ENCODE measurements at regions of chr6 and their contacts with region 1.

Region 1: GRCh38 chr6:119620846-119621555 is 271.4 kb upstream of the MAN1A1 start:
- DNase-seq: peak; percentile 37 to 79
- H3K4me3 ChIP-seq: peak overlapping the region; percentile 15; the same call in 1 of the 2 replicates
- H3K27ac ChIP-seq: peak overlapping the region; percentile 78
- H3K4me1 ChIP-seq: peaks cover 23% of the 10 kb centered on the region
- H3K27me3 ChIP-seq: no peaks in the 10 kb centered on the region
- CTCF ChIP-seq: no peak

Region 2: GRCh38 chr6:119495230-119495683 is 125.7 kb before region 1 on chr6:
- CTCF ChIA-PET with region 1: no interaction called
- POLR2A ChIA-PET with region 1: no interaction called
- intact Hi-C with region 1: no loop called
- DNase-seq: no peak
- H3K4me3 ChIP-seq: no peak overlapping the region
- H3K27ac ChIP-seq: no peak overlapping the region
- H3K4me1 ChIP-seq: peaks cover 7% of the 10 kb centered on the region; the same call in 1 of the 2 replicates
- H3K27me3 ChIP-seq: no peaks in the 10 kb centered on the region
- CTCF ChIP-seq: no peak

Region 3: DNA sequence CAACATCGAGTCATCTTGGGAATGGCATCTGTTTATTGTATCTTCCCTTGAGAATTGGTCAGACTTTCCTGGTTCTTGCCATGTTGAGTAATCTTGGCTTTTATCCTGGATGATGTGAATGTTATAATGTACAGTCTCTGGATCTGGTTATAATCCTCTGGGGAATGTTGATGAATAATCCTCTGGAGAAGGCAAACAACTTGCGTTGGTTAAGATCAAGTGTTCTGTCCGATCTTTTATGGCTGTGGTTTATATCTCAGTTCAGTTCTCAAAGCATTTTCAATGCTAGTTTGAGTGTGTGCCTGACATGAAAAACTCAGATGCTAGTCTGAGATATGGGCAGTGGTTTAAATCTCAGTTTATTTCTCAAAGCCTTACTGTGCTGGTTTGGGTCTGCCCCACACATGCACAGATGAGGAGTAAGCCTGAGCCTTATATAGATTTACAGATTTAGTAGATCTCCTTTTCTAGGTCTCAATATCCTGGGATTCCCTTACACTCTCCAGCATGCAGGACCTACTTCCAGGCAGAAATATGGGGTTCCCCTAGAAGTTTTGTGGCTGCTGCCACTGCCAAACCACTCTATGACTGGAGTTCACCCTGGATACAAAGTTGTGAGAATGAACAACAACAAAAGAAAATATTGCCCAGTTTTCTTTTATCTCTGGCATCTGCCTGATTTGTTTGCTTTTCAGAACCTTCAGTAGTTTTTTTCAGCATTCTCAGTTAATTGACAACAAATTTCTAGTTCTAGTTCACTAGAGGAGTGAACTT is 79.7 kb before region 1 on chr6:
- CTCF ChIA-PET with region 1: no interaction called
- POLR2A ChIA-PET with region 1: no interaction called
- intact Hi-C with region 1: no loop called
- DNase-seq: peak in 1 of 2 experiments; percentile 75
- H3K4me3 ChIP-seq: no peak overlapping the region
- H3K27ac ChIP-seq: peak overlapping the region; percentile 35
- H3K4me1 ChIP-seq: peaks cover 15% of the 10 kb centered on the region
- H3K27me3 ChIP-seq: no peaks in the 10 kb centered on the region
- CTCF ChIP-seq: no peak

Region 4: DNA sequence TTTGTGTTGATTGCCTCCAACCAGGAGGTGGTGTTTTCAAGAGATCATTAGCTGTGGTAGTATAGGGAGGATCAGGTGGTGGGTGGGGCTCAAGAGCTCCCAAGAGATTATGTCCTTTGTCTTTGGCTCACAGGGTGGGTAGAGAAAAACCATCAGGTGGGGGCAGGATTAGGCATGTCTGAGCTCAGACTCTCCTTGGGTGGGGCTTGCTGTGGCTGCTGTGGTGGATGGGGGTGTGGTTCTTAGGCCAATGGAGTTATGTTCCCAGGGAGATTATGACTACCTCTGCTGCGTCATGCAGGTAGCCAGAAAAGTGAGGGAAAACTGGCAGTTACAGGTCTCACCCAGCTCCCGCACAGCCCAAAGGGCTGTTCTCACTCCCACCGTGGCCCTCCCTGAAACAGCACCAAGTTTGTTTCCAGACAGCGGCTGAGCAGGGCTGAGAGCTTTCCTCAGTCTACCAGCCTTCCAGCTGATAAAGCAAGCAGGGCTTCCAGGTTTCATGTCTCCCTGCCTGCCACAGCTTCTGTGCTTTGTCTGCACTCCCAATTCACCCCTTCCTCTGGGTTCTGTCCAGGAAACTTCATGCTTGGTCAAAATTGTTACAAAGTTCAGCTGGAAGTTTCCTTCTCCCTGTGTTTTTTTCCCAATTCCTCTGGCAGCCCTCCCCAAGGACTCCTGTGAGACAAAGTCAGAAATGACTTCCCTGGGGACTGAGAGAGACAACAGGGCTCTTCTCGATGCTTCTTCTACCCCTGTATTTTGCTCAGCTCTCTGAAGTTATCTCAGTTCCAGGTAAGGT is 209.7 kb after region 1 on chr6:
- CTCF ChIA-PET with region 1: no interaction called
- POLR2A ChIA-PET with region 1: no interaction called
- intact Hi-C with region 1: loop called (anchors 10 kb)
- DNase-seq: peak; percentile 70 to 77
- H3K4me3 ChIP-seq: no peak overlapping the region
- H3K27ac ChIP-seq: peak overlapping the region; percentile 71
- H3K4me1 ChIP-seq: peaks cover 55% of the 10 kb centered on the region
- H3K27me3 ChIP-seq: no peaks in the 10 kb centered on the region
- CTCF ChIP-seq: no peak

Measured in PC-9 (cell line).